GM10248 (cell line): ENCODE measurements at regions of chr4 and their contacts with region 1.

Region 1: GRCh38 chr4:17544205-17544604 is 29.2 kb downstream of the CLRN2 start:
- DNase-seq: no peak
- CTCF ChIP-seq: no peak

Region 2: DNA sequence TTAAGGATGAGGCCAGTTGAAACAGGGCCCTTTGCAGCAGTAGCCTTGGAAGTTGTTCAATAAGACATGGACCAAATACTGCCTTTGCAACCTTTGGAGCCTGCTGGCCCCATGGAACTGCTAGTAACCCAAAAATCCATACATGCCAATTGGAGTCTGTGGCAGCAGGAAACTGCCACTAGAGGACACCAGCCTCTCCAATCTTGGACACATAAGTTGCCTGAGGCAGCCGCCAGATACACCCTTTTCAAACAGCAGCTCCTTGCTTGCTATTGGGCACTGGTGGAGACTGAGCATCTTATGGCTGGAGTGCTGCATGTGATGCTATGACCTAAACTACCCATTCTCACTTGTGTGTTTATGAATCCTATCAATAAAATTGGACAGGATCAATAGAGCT is 18.0 kb after region 1 on chr4:
- CTCF ChIA-PET with region 1: interaction called, 18 read pairs
- POLR2A ChIA-PET with region 1: no interaction called
- DNase-seq: no peak
- CTCF ChIP-seq: peak; percentile 1

Region 3: GRCh38 chr4:17597517-17597916 is 53.3 kb after region 1 on chr4:
- CTCF ChIA-PET with region 1: interaction called, 11 read pairs
- POLR2A ChIA-PET with region 1: no interaction called
- DNase-seq: no peak
- CTCF ChIP-seq: no peak

Region 4: GRCh38 chr4:17810260-17811077 is 266.3 kb after region 1 on chr4 and contains the starts of genes DCAF16 and NCAPG:
- CTCF ChIA-PET with region 1: interaction called, 27 read pairs
- POLR2A ChIA-PET with region 1: no interaction called
- DNase-seq: peak; percentile 97
- CTCF ChIP-seq: no peak

Region 5: DNA sequence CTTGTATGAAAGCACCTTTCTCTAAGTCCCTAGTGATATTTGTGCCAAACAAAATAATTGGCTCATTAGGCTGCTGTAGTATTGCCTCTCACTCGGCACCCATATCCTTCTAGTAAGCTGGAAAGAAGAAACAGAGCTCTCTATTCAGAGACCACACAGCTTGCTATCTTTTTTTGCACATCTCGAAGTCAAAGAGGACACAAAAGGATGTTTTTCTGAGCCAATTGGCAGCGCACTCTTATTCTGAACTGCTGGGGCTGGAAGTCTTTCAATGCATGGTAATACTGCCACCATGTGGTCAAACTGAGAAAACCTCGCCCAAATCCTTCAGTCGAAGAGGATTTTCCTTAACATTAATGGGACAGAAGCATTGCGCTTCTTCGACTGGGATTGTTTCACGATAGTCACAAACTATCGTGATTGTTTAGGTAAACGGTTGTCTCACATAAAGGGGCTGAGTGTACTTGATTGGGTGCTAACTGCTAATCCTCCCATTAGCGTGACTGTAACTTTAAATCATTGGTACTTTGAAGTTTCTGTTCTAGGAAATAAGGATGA is 1049.3 kb after region 1 on chr4:
- CTCF ChIA-PET with region 1: interaction called, 16 read pairs
- POLR2A ChIA-PET with region 1: no interaction called
- DNase-seq: peak; percentile 59
- CTCF ChIP-seq: peak; percentile 82